PC-9 (cell line): ENCODE measurements at regions of chr9 and their contacts with region 1.

Region 1: GRCh38 chr9:106921341-106921899 is 58.5 kb downstream of the ZNF462 start:
- DNase-seq: peak in 1 of 2 experiments; percentile 42
- H3K4me3 ChIP-seq: no peak overlapping the region
- H3K27ac ChIP-seq: no peak overlapping the region
- H3K4me1 ChIP-seq: peaks cover 33% of the 10 kb centered on the region
- H3K27me3 ChIP-seq: no peaks in the 10 kb centered on the region
- CTCF ChIP-seq: no peak

Region 2: GRCh38 chr9:105911104-105911911 is 1010.1 kb before region 1 on chr9:
- CTCF ChIA-PET with region 1: no interaction called
- POLR2A ChIA-PET with region 1: no interaction called
- intact Hi-C with region 1: loop called (anchors 5 kb)
- DNase-seq: peak; percentile 30 to 72
- H3K4me3 ChIP-seq: peak overlapping the region; percentile 39; the same call in 1 of the 2 replicates
- H3K27ac ChIP-seq: peak overlapping the region; percentile 94
- H3K4me1 ChIP-seq: peaks cover 60% of the 10 kb centered on the region
- H3K27me3 ChIP-seq: no peaks in the 10 kb centered on the region
- CTCF ChIP-seq: no peak

Region 3: DNA sequence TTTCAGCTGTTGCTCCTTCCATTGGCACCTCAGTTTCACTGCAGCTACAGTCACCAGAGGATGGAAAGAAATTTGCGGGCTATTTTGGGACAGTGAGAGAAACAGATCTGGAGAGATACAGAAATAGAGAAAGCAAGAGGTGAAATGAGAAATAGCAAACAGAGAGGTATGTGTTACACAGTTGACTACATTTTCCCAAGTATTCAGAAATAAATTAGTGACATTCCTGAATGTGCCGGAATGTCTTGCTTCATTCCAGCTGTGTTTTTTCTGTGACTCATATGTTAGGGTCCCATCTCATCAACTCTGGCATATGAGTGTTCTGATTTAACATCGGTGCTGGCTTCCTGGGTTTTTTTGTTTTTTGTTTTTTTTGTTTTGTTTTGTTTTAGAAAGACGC is 122.3 kb before region 1 on chr9:
- CTCF ChIA-PET with region 1: no interaction called
- POLR2A ChIA-PET with region 1: no interaction called
- intact Hi-C with region 1: loop called (anchors 10 kb)
- DNase-seq: peak in 1 of 2 experiments; percentile 71
- H3K4me3 ChIP-seq: no peak overlapping the region
- H3K27ac ChIP-seq: no peak overlapping the region
- H3K4me1 ChIP-seq: peaks cover 19% of the 10 kb centered on the region
- H3K27me3 ChIP-seq: no peaks in the 10 kb centered on the region
- CTCF ChIP-seq: no peak

Region 4: DNA sequence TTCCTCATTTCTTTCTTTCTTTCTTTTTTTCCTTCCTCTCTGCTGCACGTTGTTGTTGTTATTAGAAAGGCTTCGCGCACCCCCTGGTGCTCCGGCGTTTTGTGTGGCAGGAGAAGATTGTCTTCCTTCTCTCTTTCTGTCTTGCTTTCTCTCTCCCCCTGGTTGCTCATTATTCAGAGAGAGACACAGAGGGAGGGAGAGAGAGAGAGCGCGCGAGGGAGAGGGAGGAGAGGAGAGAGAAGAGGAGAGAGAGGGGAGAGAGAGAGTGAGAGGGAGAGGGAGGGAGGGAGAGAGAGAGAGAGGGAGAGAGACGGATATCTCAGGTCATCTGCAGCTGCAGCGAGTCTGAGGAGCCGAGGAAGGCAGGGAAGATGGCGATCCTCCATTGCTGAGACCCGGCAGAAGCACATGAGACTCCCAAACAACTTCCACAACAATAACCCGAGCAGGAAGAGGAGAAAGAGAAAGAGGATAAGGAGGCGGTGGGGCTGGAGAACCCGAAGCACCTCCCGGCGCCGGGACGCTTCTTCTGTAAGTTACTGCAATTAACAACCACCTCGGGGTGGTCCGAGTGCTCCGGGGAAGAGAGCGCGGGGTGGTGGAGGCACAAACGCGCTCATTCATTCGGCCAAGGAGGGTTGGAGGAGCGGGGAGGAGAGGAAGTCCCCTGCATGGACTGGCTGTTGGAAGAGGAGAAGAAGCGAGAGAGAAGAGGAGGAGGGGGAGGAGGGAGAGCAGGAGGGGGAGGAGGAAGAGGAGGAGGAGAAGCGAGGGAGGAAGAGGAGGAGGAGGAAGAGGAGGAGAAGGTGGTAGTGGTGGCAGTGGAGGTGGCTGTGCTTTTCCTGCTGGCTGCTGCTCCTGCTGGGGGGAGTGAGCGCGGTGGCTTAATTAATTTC is 58.3 kb before region 1 on chr9 and contains the start of gene ZNF462:
- CTCF ChIA-PET with region 1: no interaction called
- POLR2A ChIA-PET with region 1: interaction called, 5 read pairs
- intact Hi-C with region 1: loop called (anchors 2 kb)
- DNase-seq: peak in 1 of 2 experiments; percentile 26
- H3K4me3 ChIP-seq: peak within 1 kb of the TSS; percentile 97
- H3K27ac ChIP-seq: no peak within 1 kb of the TSS
- H3K4me1 ChIP-seq: peaks cover 5% of the 10 kb centered on the region; the same call in 1 of the 2 replicates
- H3K27me3 ChIP-seq: no peaks in the 10 kb centered on the region
- CTCF ChIP-seq: peak; percentile 56
- total RNA-seq, gene ZNF462: 3.2 and 4.8 TPM in 2 replicates

Region 5: DNA sequence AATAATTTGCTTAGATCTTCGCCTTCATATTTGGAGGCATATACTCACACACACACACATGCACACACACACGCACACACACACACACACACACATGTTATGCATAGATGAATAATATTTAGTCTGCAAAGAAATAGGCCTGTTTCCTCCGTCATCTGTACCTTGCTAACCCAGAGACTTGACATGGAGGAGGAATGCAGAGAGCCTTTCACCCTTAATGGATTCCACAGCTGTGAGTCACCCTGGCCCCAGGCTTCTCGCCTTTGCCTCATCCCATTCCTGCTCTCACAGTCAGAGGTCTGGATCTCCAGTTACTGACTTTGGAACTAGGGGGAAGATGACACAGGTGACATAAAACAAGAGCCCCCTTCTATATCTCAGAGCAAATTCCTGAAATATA is 28.8 kb before region 1 on chr9:
- CTCF ChIA-PET with region 1: no interaction called
- POLR2A ChIA-PET with region 1: no interaction called
- intact Hi-C with region 1: loop called (anchors 1 kb)
- DNase-seq: peak; percentile 93 to 95
- H3K4me3 ChIP-seq: no peak overlapping the region; the same call in 1 of the 2 replicates
- H3K27ac ChIP-seq: peak overlapping the region; percentile 98
- H3K4me1 ChIP-seq: peaks cover 52% of the 10 kb centered on the region
- H3K27me3 ChIP-seq: no peaks in the 10 kb centered on the region
- CTCF ChIP-seq: no peak

Region 6: DNA sequence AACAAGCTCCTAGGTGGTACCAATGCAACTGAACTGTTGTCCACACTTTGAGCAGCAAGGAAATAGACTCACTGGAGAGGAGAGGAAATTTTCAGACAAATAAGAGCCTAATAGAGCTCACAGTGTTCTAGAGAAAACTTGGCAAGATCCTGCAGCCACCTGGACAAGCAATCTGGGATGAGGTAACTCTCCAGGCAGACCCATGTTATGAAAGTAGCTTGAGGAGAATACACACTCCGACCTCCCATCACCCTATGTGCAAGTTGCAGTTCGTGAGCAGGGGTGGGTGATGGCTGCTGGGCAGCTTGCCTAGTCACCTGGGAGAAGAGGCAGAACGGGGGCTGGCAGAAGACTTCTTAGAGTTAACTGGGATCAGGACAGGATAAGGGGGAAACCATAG is 466.0 kb after region 1 on chr9:
- CTCF ChIA-PET with region 1: no interaction called
- POLR2A ChIA-PET with region 1: no interaction called
- intact Hi-C with region 1: no loop called
- DNase-seq: no peak
- H3K4me3 ChIP-seq: no peak overlapping the region
- H3K27ac ChIP-seq: no peak overlapping the region
- H3K4me1 ChIP-seq: peaks cover 18% of the 10 kb centered on the region
- H3K27me3 ChIP-seq: no peaks in the 10 kb centered on the region
- CTCF ChIP-seq: no peak